Endothelial cell of umbilical vein (primary cell): ENCODE measurements at regions of chr19 and their contacts with region 1.

Region 1: DNA sequence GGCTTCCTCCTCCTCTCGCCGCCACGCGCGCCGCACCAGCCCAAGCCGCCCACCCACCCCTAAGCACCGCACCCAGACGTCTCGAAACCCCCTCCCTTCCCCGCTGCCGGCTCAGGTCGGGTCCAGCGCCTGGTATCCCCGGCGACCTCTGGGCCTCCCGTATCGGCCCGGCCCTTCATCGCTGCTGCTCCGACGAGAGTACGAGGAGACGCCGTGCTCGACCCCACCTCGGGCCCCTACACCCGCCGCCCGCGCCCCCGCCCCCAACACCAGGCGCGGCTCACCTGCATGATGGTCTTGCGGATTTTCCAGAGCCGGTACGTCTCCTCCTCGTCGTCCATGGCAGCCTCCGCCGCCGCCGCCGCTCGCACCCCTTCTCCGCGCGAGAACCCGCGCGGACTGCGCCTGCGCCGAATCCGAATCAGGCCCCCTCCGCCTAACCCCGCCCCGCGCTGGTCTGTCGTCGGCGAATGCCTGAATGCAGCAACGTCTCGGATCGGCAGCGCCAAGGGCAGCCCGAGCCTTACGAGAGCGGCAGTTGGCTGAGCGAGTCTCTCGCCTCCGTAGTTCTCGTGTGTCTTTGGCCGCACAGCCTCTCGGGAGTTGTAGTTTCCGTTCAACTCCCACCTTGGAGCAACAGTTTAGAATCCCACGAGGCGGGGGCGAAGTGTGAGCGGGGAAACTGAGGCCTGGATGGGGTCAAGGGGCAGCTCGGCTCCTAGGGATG is at the start of gene POLR2E:
- DNase-seq: peak; percentile 97
- H3K4me3 ChIP-seq: peak within 1 kb of the TSS; percentile 82 to 93 (median 87)
- H3K27ac ChIP-seq: peak within 1 kb of the TSS; percentile 25
- H3K4me1 ChIP-seq: peaks cover 10% of the 10 kb centered on the region
- H3K27me3 ChIP-seq: no peaks in the 10 kb centered on the region
- CTCF ChIP-seq: no peak
- POLR2A ChIP-seq: peak; percentile 81
- total RNA-seq, gene POLR2E: 252 and 272 TPM in 2 replicates

Region 2: GRCh38 chr19:1064661-1065605 is 30.2 kb before region 1 on chr19:
- CTCF ChIA-PET with region 1: interaction called, 6 read pairs
- POLR2A ChIA-PET with region 1: no interaction called
- dilution Hi-C with region 1: no loop called
- intact Hi-C with region 1: loop called (anchors 2 kb)
- DNase-seq: peak; percentile 55
- H3K4me3 ChIP-seq: no peak overlapping the region
- H3K27ac ChIP-seq: no peak overlapping the region
- H3K4me1 ChIP-seq: peaks cover 31% of the 10 kb centered on the region
- H3K27me3 ChIP-seq: no peaks in the 10 kb centered on the region
- CTCF ChIP-seq: peak; percentile 70 to 82
- POLR2A ChIP-seq: no peak